Caco-2 (cell line): ENCODE measurements at regions of chr7 and their contacts with region 1.

Region 1: GRCh38 chr7:151631968-151632749 is 112.5 kb upstream of the RHEB start:
- DNase-seq: peak; percentile 89 to 94
- H3K4me3 ChIP-seq: peak overlapping the region; percentile 85
- H3K4me3 Mint-ChIP-seq: peak overlapping the region; percentile 88
- H3K27ac Mint-ChIP-seq: peak overlapping the region; percentile 62
- H3K4me1 ChIP-seq: peaks cover 11% of the 10 kb centered on the region
- H3K4me1 Mint-ChIP-seq: peaks cover 6% of the 10 kb centered on the region
- H3K27me3 ChIP-seq: no peaks in the 10 kb centered on the region
- H3K27me3 Mint-ChIP-seq: no peaks in the 10 kb centered on the region
- CTCF ChIP-seq: peak; percentile 42 to 50

Region 2: GRCh38 chr7:150514748-150515222 is 1117.4 kb before region 1 on chr7 and contains the start of gene GIMAP7:
- CTCF ChIA-PET with region 1: no interaction called
- POLR2A ChIA-PET with region 1: no interaction called
- intact Hi-C with region 1: no loop called
- DNase-seq: no peak
- H3K4me3 ChIP-seq: no peak within 1 kb of the TSS
- H3K4me3 Mint-ChIP-seq: no peak within 1 kb of the TSS
- H3K27ac Mint-ChIP-seq: no peak within 1 kb of the TSS
- H3K4me1 ChIP-seq: no peaks in the 10 kb centered on the region
- H3K4me1 Mint-ChIP-seq: no peaks in the 10 kb centered on the region
- H3K27me3 ChIP-seq: no peaks in the 10 kb centered on the region
- H3K27me3 Mint-ChIP-seq: peaks cover 11% of the 10 kb centered on the region
- CTCF ChIP-seq: no peak
- total RNA-seq, gene GIMAP7: not detected in 2 replicates

Region 3: DNA sequence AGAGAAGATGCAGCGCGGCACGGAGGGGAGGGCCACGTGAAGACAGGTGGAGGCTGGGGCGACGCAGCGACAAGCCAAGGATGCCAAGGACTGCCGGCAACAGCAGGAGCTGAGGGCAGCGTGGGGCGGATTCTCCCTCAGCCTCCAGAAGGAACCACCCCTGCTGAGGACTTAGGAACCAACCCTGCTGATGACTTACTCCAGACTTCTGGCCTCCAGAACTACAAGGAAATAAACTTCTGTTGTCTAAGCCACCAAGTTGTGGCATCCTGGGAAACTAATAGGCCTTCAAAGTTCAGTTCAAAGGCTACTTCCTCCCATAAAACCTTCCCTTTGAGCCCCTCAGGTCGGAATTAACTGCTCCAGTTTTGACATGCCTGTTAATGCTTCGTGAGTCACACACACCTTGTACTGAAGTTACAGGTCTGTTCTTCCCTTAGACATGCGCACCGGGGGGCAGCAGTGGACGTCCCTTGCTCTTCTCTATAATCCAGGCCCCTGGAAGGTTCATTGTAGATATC is 24.1 kb before region 1 on chr7:
- CTCF ChIA-PET with region 1: no interaction called
- POLR2A ChIA-PET with region 1: no interaction called
- intact Hi-C with region 1: loop called (anchors 1 kb)
- DNase-seq: peak; percentile 59 to 71
- H3K4me3 ChIP-seq: no peak overlapping the region
- H3K4me3 Mint-ChIP-seq: no peak overlapping the region
- H3K27ac Mint-ChIP-seq: no peak overlapping the region
- H3K4me1 ChIP-seq: 0 out of 2 replicates have a peak, but pooled peaks cover 5% of the 10 kb centered on the region
- H3K4me1 Mint-ChIP-seq: no peaks in the 10 kb centered on the region
- H3K27me3 ChIP-seq: no peaks in the 10 kb centered on the region
- H3K27me3 Mint-ChIP-seq: no peaks in the 10 kb centered on the region
- CTCF ChIP-seq: peak; percentile 13 to 32